ENCODE measurements at regions of chr2 and their contacts with region 1.

Region 1: GRCh38 chr2:38106405-38107094 is 30.6 kb upstream of the CYP1B1 start:
- DNase-seq: no peak
- ATAC-seq: peak; percentile 88
- H3K4me3 Mint-ChIP-seq: no peak overlapping the region
- H3K27ac Mint-ChIP-seq: peak overlapping the region; percentile 61
- H3K4me1 Mint-ChIP-seq: peaks cover 21% of the 10 kb centered on the region
- H3K27me3 Mint-ChIP-seq: peaks cover 33% of the 10 kb centered on the region

Region 2: GRCh38 chr2:38037757-38038621 is 68.6 kb before region 1 on chr2:
- CTCF ChIA-PET with region 1: no interaction called
- POLR2A ChIA-PET with region 1: no interaction called
- intact Hi-C with region 1: loop called in 1 of 2 experiments (anchors 5 kb)
- DNase-seq: peak; percentile 71
- ATAC-seq: peak; percentile 92
- H3K4me3 Mint-ChIP-seq: peak overlapping the region; percentile 46
- H3K27ac Mint-ChIP-seq: peak overlapping the region; percentile 69
- H3K4me1 Mint-ChIP-seq: peaks cover 27% of the 10 kb centered on the region
- H3K27me3 Mint-ChIP-seq: peaks cover 38% of the 10 kb centered on the region

Region 3: DNA sequence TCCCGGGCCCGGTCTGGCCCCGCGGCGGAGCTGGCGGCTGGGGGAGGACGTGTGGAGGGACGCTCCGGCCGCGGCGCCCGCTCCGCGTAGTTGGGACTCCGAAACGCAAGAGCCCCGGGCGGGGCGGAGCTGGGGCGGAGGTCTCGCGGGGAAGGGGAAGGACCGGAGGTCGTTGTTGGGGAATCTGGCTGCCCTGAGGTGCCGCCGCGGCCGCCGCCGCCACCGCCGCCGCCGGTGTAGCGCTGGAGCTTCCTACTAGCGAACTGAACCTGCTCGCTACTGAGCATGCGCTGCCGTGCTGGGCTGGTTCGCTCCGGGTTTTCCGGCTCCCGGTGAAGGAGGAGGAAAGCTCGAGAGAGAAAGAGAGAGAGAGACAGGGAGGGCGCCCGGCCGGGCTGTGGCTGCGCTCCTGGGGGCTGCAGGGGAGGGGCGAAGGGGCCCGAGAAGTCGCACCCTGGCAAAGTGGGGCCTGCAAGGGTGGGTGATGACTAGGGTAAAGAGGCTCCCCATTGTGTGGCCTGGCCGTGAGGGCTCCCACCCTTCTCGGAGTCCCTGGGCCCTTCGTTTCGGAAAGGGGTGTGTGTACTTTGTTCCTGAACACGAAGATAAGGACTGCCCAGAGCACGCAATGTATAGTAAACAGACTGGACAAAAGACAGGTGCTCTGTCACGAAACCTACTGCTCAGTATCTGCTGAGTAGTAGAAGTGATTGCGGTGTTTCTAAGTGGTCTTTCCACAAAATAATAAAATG is 1014.4 kb after region 1 on chr2 and contains the start of gene SOS1:
- CTCF ChIA-PET with region 1: no interaction called
- POLR2A ChIA-PET with region 1: no interaction called
- intact Hi-C with region 1: no loop called
- DNase-seq: peak; percentile 97
- ATAC-seq: peak; percentile 66
- H3K4me3 Mint-ChIP-seq: peak within 1 kb of the TSS; percentile 82
- H3K27ac Mint-ChIP-seq: peak within 1 kb of the TSS; percentile 96
- H3K4me1 Mint-ChIP-seq: peaks cover 51% of the 10 kb centered on the region
- H3K27me3 Mint-ChIP-seq: no peaks in the 10 kb centered on the region
- total RNA-seq, gene SOS1: 30.1 to 32.0 TPM

Measured in activated CD4-positive, alpha-beta T cell treated with anti-CD3 and anti-CD28 coated beads for 36 hours (primary cell).